ENCODE measurements at regions of chr6 and their contacts with region 1.

Region 1: GRCh38 chr6:56851541-56852259 is 103.2 kb upstream of the BEND6 start:
- DNase-seq: peak; percentile 77
- H3K4me3 ChIP-seq: peak overlapping the region; percentile 40 to 60 (median 58)
- H3K27ac ChIP-seq: peak overlapping the region; percentile 51 to 80 (median 74)
- H3K4me1 ChIP-seq: peaks cover 0 to 31% (median 21%) of the 10 kb centered on the region in 4 donors
- H3K27me3 ChIP-seq: no peaks in the 10 kb centered on the region
- CTCF ChIP-seq: peak; percentile 35 to 63 (median 55)
- EP300 ChIP-seq: no peak
- POLR2A ChIP-seq: no peak

Region 2: DNA sequence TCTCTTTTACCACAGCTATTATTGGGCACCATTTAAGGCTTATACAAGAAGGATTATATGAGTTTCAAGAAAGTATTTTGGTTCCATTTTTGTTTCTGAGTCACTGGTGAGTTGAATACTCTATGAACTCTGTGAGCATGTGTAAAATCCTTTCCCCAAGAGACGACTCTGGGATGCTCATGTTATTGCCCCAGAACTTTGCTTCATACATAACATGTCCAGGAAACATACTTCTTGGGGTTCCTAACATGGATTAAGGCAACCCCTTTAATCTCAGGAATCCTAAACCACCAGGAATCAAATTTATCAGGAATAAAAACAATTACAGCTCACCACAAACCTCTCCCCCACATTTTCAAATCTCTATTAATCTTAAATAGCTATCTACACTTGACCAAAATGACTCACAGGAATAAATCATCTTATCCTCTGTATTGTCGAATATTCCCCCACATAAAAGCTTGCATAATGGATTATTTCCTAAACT is 486.8 kb before region 1 on chr6:
- intact Hi-C with region 1: loop called (anchors 10 kb)
- DNase-seq: no peak
- H3K4me3 ChIP-seq: no peak overlapping the region
- H3K27ac ChIP-seq: peak overlapping the region in 2 of 4 donors; percentile 6 to 95
- H3K4me1 ChIP-seq: peaks cover 0 to 59% (median 46%) of the 10 kb centered on the region in 4 donors
- H3K27me3 ChIP-seq: no peaks in the 10 kb centered on the region
- CTCF ChIP-seq: no peak
- EP300 ChIP-seq: no peak
- POLR2A ChIP-seq: no peak

Region 3: DNA sequence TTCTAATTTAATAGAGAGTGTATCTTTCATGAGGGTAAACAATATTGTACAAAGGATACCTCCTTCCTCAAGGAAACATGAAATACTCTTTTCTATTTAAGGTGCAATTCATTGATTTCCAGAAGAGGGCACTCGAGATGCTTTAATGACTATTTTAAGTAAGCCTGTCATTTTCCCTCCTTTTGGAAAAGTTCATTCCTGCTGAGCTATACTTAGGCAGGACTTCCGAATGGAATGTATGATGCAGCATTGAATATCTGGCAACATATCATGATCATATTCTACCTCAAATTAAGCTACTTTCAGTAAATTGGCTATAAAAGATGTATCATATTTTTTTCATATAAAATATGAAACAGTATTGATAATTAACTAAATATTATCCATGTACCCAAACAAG is 214.1 kb before region 1 on chr6:
- intact Hi-C with region 1: loop called (anchors 2 kb)
- DNase-seq: no peak
- H3K4me3 ChIP-seq: no peak overlapping the region
- H3K27ac ChIP-seq: peak overlapping the region in 3 of 4 donors; percentile 23 to 58 (median 34)
- H3K4me1 ChIP-seq: peaks cover 0 to 17% (median 1%) of the 10 kb centered on the region in 4 donors
- H3K27me3 ChIP-seq: no peaks in the 10 kb centered on the region
- CTCF ChIP-seq: peak; percentile 52 to 73 (median 60)
- EP300 ChIP-seq: no peak
- POLR2A ChIP-seq: no peak

Region 4: DNA sequence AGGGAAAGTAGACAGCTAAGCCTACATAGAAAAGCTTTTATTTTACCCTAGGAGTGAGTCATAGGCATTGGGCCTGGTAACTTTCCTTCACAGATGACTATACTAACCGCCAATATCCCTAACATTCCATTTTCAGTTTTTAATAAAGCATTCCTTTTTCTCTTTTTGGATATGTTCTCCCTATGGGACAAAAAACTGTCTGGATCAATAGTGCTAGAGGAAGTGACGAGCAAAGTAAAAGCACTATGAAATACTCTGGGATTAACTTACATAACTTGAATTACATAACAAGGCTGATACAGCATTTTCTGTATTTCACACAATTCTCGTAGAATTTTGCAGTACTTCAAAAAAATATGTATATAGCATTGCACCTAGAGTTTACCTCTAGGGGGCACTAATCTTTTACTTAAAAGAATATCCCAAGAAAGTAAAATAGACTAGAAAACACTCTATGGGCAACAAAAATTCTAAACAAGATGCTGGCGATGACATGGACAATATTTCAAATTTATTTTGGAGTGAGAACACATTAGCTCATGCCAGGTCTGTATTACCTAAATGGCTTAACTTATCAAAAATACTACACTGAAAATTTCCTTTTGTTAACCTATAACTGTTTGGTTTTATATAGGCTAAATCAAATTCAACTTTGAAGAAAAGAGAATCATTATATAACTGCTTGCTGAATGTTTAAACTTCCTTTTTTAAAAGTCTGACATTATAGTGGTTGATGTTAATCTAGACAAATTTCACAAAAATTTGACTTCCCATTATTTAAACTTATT is 142.7 kb before region 1 on chr6:
- intact Hi-C with region 1: loop called (anchors 2 kb)
- DNase-seq: no peak
- H3K4me3 ChIP-seq: no peak overlapping the region
- H3K27ac ChIP-seq: peak overlapping the region; percentile 4 to 74 (median 72)
- H3K4me1 ChIP-seq: peaks cover 0 to 76% (median 46%) of the 10 kb centered on the region in 4 donors
- H3K27me3 ChIP-seq: no peaks in the 10 kb centered on the region
- CTCF ChIP-seq: peak; percentile 19 to 65 (median 49)
- EP300 ChIP-seq: no peak
- POLR2A ChIP-seq: no peak

Region 5: DNA sequence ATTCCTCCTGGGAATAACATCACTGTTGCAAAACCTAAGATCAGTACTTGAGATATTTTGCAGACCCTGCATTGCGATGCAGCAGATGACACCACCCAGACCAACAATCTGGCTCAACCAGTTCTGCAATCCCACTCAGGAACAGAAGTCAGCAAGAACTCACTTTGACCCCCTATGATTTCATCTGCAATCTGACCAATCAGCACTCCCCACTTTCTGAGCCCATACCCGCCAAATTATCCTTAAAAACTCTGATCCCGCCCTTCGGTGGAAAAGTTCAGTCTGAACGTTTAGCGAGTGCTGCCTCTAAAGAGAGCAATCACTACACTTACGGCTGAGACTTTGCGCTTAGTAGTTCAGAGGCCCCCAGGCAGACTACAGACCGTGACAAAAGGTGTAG is 177.5 kb after region 1 on chr6:
- intact Hi-C with region 1: no loop called
- DNase-seq: no peak
- H3K4me3 ChIP-seq: no peak overlapping the region
- H3K27ac ChIP-seq: no peak overlapping the region
- H3K4me1 ChIP-seq: no peaks in the 10 kb centered on the region
- H3K27me3 ChIP-seq: no peaks in the 10 kb centered on the region
- CTCF ChIP-seq: no peak
- EP300 ChIP-seq: no peak
- POLR2A ChIP-seq: no peak